AG04450 (cell line): ENCODE measurements at regions of chr1 and their contacts with region 1.

Region 1: DNA sequence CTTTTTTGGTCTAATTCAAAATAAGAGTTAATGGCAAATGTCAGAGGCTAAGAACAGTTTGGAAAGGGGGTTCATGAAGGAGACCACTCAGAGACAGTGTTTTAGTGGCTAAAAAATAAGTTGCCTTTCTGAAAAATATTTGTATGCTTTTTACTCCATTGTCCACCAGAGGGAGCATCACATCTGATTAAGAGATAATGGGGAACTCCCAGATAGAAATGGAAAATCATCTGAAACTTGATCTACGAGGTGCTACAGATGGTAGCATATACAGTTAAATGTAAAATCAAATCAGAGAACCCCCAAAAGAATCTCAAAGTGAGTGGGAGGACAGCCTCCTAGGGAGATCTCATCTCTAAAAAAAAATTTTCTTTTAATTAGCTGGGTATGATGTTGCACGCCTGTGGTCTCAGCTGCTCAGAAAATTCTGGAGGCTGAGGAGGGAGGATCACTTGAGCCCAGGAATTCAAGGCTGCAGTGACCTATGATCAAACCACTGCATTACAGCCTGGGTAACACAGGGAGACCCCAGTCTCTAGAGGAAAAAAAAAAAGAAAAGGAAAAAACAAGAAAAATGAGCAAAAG is 9.7 kb downstream of the SMYD3 start:
- DNase-seq: peak; percentile 39
- H3K4me3 ChIP-seq: no peak overlapping the region
- H3K27ac ChIP-seq: no peak overlapping the region
- H3K27me3 ChIP-seq: no peaks in the 10 kb centered on the region
- CTCF ChIP-seq: peak; percentile 73

Region 2: DNA sequence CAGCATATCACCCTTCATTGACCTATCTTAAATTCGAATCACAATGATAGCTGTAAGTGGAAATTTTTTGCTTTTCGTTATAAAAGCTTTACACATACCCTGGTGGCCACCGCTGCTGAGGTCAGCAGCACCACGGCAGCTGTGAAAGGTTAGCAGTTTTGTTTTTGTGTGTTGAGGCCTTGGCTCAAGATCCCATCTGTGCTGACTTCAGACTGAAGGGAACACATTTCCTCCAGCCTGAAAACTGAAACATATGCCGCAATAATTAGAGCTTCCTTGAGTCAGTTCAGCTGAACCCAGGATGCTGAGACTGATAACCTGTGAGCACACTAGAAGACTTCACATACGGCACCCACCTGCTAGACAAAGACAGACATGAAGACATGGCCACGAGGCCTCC is 93.3 kb before region 1 on chr1:
- CTCF ChIA-PET with region 1: no interaction called
- POLR2A ChIA-PET with region 1: no interaction called
- DNase-seq: no peak
- H3K4me3 ChIP-seq: no peak overlapping the region
- H3K27ac ChIP-seq: no peak overlapping the region
- H3K27me3 ChIP-seq: no peaks in the 10 kb centered on the region
- CTCF ChIP-seq: no peak

Region 3: DNA sequence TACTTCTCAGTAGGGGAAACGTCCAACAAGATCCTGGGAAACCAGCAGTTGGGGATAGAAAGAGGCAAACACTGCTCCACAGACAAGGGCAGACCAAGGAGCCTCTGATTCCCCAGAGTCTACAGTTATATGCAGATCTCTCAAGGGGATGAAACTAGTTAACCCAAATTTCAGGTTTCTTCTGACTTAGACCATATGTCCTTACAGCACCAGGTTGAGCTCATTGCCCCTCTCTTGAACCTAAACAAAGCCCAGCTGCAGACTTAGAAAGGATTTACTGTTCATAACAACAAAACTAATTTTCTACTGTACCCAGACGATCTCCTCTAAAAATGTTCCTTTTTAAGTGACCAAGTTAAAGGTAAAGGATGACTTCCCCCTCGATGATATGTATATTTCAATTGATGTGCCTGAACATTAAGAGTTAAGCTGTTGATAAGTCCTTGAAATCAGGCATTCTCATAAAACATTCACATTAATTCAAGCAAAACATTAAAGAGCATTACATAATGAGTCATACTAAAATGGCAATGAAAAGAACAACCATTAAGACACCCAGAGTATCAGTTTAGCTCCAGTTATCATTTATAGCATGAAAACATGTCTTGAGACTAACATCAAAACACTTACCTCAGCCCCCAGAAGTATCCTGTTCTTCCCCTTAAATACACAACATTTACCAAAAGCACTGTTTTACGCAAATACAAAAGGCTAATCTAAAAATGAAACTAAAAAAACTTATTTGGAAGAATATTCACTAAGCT is 14.4 kb before region 1 on chr1:
- CTCF ChIA-PET with region 1: interaction called, 18 read pairs
- POLR2A ChIA-PET with region 1: no interaction called
- DNase-seq: peak; percentile 32
- H3K4me3 ChIP-seq: peak overlapping the region; percentile 8
- H3K27ac ChIP-seq: peak overlapping the region; percentile 65
- H3K27me3 ChIP-seq: no peaks in the 10 kb centered on the region
- CTCF ChIP-seq: no peak

Region 4: DNA sequence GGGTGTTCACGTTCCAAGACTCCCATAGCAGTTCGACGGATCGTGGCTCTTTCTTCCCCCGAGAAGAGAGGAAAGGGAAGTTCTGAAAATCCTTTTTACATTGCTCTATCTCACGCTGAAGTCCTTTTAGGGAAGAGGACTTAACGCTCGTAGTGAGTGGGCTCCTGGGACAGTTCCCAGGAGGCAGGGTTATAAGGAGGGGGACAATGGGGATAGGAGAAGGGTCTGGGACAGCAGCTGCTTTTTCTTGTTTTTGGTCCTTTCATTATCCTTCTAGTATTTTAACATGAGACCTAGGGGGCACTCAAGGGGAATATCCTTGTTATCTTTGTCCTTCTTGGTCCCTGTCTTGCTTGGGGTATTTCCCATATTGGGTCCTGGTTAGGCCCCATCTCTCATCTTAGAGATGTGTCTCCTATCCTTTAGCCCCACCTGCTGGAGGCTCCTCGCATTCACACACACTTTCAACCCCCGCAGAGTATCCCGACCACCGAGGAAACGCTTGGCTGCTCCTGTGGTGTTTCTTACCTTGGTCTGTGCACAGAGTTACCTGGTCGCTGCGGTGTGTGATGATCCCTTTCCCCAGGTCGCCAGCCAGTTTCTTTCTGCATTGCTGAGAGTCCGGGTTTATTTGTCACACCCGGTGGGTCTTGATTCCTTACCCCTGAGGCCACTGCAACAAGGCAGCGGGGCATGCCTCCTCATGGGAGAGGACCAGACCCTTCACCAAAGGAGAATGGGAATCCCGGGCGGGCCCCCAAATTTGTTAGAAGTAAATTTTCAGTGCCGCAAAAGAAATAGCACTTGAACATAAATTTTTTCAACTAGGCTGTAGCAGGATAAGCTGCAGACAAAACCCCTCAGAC is 256.5 kb after region 1 on chr1:
- CTCF ChIA-PET with region 1: interaction called, 11 read pairs
- POLR2A ChIA-PET with region 1: no interaction called
- DNase-seq: peak; percentile 41
- H3K4me3 ChIP-seq: no peak overlapping the region
- H3K27ac ChIP-seq: no peak overlapping the region
- H3K27me3 ChIP-seq: no peaks in the 10 kb centered on the region
- CTCF ChIP-seq: peak; percentile 85